CD8-positive, alpha-beta T cell (primary cell): ENCODE measurements at regions of chr5 and their contacts with region 1.

Region 1: GRCh38 chr5:177382423-177383029 is 1.7 kb upstream of the SLC34A1 start:
- DNase-seq: peak in 3 of 9 experiments; percentile 37 to 64 (median 51)
- ATAC-seq: peak; percentile 70
- H3K4me3 ChIP-seq: no peak overlapping the region
- H3K4me3 Mint-ChIP-seq: no peak overlapping the region
- H3K27ac ChIP-seq: no peak overlapping the region
- H3K27ac Mint-ChIP-seq: no peak overlapping the region
- H3K4me1 ChIP-seq: peaks cover 32% of the 10 kb centered on the region
- H3K4me1 Mint-ChIP-seq: peaks cover 30% of the 10 kb centered on the region
- H3K27me3 ChIP-seq: no peaks in the 10 kb centered on the region
- H3K27me3 Mint-ChIP-seq: no peaks in the 10 kb centered on the region
- CTCF ChIP-seq: no peak

Region 2: DNA sequence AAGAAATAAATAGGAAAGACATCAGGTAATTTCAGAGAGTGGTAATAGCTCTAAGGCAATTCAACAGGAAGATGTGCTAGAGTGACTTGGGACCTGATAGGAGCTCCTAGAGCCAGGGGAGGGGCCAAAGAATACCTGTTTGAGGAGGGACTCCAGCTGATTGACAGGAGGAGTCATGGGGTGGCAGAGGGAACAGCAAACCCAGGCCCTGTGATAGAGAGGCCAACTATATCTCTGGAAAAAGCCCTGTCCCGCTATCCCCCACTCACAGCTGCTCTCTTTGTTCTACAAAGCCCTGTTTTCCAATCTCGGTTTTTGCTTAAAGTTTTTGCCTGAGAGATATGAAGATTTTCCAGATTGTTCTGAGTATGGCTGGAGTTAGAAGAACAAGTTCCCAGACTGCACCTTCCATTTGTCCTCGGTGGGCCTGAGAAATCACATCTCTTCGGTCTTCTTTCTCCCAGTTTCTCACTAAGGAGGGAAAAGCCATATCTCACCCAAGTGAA is 258.0 kb before region 1 on chr5:
- CTCF ChIA-PET with region 1: no interaction called
- POLR2A ChIA-PET with region 1: no interaction called
- intact Hi-C with region 1: no loop called
- DNase-seq: peak in 1 of 9 experiments; percentile 33
- ATAC-seq: peak; percentile 63
- H3K4me3 ChIP-seq: no peak overlapping the region
- H3K4me3 Mint-ChIP-seq: no peak overlapping the region
- H3K27ac ChIP-seq: no peak overlapping the region
- H3K27ac Mint-ChIP-seq: peak overlapping the region; percentile 14
- H3K4me1 ChIP-seq: peaks cover 14% of the 10 kb centered on the region
- H3K4me1 Mint-ChIP-seq: peaks cover 15% of the 10 kb centered on the region
- H3K27me3 ChIP-seq: no peaks in the 10 kb centered on the region
- H3K27me3 Mint-ChIP-seq: no peaks in the 10 kb centered on the region
- CTCF ChIP-seq: no peak

Region 3: GRCh38 chr5:177317959-177318377 is 64.6 kb before region 1 on chr5:
- CTCF ChIA-PET with region 1: interaction called, 26 read pairs
- POLR2A ChIA-PET with region 1: no interaction called
- intact Hi-C with region 1: loop called in 1 of 2 experiments (anchors 1 kb)
- DNase-seq: peak; percentile 52 to 85 (median 75)
- ATAC-seq: peak; percentile 81
- H3K4me3 ChIP-seq: no peak overlapping the region
- H3K4me3 Mint-ChIP-seq: no peak overlapping the region
- H3K27ac ChIP-seq: no peak overlapping the region
- H3K27ac Mint-ChIP-seq: no peak overlapping the region
- H3K4me1 ChIP-seq: peaks cover 10% of the 10 kb centered on the region
- H3K4me1 Mint-ChIP-seq: peaks cover 14% of the 10 kb centered on the region
- H3K27me3 ChIP-seq: no peaks in the 10 kb centered on the region
- H3K27me3 Mint-ChIP-seq: no peaks in the 10 kb centered on the region
- CTCF ChIP-seq: peak; percentile 90

Region 4: DNA sequence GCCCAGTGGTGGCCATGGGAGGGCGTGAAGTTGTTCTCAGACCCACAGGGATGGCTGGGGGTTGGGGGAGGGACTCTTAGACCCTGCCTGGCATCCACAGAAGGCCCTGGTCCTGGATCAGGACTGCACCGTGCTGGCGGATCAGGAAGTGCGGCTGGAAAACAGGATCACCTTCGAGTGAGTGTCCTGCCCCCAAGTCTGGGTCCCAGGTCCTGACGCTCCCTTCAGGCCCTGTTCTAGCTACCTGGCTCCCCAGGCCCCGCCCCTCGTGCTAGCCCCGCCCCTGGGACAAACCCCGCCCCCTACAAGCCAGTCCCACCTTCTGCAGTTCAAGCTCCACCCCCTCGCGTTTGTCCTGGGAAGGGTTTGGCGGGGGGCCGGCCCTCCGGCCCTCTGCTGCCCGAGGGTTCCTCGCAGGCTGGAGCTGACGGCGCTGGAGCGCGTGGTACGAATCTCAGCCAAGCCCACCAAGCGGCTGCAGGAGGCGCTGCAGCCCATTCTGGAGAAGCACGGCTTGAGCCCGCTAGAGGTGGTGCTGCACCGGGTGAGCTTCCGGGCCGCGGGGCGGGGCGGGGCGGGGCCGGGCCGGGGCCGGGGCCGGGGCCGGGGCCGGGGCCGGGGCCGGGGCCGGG is 11.9 kb before region 1 on chr5:
- CTCF ChIA-PET with region 1: interaction called, 17 read pairs
- POLR2A ChIA-PET with region 1: interaction called, 4 read pairs
- intact Hi-C with region 1: no loop called
- DNase-seq: peak in 8 of 9 experiments; percentile 18 to 81 (median 58)
- ATAC-seq: peak; percentile 63
- H3K4me3 ChIP-seq: no peak overlapping the region
- H3K4me3 Mint-ChIP-seq: no peak overlapping the region
- H3K27ac ChIP-seq: peak overlapping the region in 1 of 2 experiments; percentile 48
- H3K27ac Mint-ChIP-seq: peak overlapping the region; percentile 32
- H3K4me1 ChIP-seq: peaks cover 73% of the 10 kb centered on the region
- H3K4me1 Mint-ChIP-seq: peaks cover 69% of the 10 kb centered on the region
- H3K27me3 ChIP-seq: no peaks in the 10 kb centered on the region
- H3K27me3 Mint-ChIP-seq: no peaks in the 10 kb centered on the region
- CTCF ChIP-seq: no peak

Region 5: DNA sequence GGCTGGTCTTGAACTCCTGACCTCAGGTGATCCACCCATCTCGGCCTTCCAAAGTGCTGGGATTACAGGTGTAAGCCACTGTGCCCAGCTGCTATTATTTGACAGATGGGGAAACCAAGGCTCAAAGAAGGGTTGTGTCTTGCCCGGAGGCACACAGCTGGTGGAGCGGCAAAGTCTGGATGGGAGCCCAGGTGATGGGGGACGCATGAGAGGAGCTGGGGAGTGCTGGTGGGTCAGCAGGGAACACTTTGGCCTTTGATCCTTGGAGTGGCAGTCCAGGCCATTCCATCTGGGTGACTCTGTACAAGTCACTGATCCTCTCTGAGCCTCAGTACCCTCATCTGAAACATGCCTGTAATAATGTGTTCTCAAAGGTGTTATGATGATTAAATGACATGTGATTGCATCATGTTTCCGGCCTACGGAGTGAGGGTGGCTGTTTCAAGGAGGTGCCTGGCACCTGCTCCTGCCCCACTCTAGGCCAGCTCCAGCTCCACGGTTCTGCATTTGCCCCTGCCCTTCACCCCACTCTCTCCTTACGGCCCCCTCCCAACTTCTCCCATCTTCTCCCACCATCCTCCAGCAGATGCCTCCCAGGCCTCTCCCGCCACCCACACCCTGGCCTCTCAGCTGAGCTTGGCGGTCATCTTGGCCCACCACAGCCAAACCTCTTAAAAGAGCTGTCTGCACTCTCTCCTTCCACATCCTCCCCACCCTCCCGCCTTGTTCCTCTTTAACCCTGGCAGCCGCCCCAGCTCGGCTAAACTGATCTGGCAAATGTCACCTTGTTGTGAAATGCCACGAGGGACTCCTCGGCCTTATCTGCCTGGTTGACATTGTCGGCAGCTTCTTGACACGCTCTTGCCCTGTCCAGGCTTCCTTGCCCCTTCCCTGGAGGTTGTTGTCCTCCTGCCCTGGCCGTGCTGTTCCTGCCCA is 96.5 kb after region 1 on chr5:
- CTCF ChIA-PET with region 1: no interaction called
- POLR2A ChIA-PET with region 1: no interaction called
- intact Hi-C with region 1: no loop called
- DNase-seq: peak in 5 of 9 experiments; percentile 32 to 75 (median 58)
- ATAC-seq: peak; percentile 87
- H3K4me3 ChIP-seq: no peak overlapping the region
- H3K4me3 Mint-ChIP-seq: peak overlapping the region; percentile 37
- H3K27ac ChIP-seq: peak overlapping the region; percentile 21 to 68
- H3K27ac Mint-ChIP-seq: peak overlapping the region; percentile 92
- H3K4me1 ChIP-seq: peaks cover 35% of the 10 kb centered on the region
- H3K4me1 Mint-ChIP-seq: peaks cover 45% of the 10 kb centered on the region
- H3K27me3 ChIP-seq: no peaks in the 10 kb centered on the region
- H3K27me3 Mint-ChIP-seq: no peaks in the 10 kb centered on the region
- CTCF ChIP-seq: no peak